ENCODE measurements at regions of chr1 and their contacts with region 1.

Region 1: DNA sequence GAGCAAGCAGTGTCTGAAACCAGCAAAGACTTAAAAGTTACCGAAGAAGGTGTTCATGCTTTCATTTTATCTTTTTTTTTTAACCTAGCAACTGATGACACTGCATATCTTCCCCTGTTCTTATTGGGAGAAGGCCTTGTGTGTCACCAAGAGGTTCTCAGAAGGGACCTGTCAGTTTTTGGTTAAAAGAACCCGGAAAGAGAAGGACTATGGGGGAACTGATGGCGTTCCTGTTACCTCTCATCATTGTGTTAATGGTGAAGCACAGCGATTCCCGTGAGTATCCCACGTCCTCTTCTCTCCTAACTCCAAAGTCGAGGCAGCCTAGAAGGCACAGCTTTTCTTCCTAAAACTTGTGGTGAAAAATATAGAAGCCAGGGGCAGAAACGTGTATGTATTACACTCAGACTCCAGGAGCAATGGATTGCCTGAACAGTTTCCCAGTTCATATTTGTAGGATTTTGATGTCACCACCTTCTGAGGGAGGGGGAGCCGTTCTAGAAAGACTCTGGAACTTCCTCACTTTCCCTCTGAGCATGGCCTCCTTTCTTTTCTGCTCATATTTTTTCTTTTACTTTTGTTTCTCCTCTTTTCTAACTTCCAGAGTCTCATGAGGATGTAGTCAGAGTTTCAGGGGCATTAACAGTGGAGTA is at the start of gene MR1:
- DNase-seq: peak; percentile 43
- H3K4me3 Mint-ChIP-seq: peak within 1 kb of the TSS; percentile 91
- H3K27ac Mint-ChIP-seq: peak within 1 kb of the TSS; percentile 94
- H3K4me1 Mint-ChIP-seq: peaks cover 53% of the 10 kb centered on the region
- H3K27me3 Mint-ChIP-seq: no peaks in the 10 kb centered on the region
- total RNA-seq, gene MR1: 36.4 to 36.5 TPM

Region 2: GRCh38 chr1:181010789-181011188 is 23.1 kb before region 1 on chr1:
- CTCF ChIA-PET with region 1: no interaction called
- POLR2A ChIA-PET with region 1: no interaction called
- DNase-seq: no peak
- H3K4me3 Mint-ChIP-seq: no peak overlapping the region
- H3K27ac Mint-ChIP-seq: no peak overlapping the region
- H3K4me1 Mint-ChIP-seq: peaks cover 24% of the 10 kb centered on the region
- H3K27me3 Mint-ChIP-seq: no peaks in the 10 kb centered on the region

Region 3: DNA sequence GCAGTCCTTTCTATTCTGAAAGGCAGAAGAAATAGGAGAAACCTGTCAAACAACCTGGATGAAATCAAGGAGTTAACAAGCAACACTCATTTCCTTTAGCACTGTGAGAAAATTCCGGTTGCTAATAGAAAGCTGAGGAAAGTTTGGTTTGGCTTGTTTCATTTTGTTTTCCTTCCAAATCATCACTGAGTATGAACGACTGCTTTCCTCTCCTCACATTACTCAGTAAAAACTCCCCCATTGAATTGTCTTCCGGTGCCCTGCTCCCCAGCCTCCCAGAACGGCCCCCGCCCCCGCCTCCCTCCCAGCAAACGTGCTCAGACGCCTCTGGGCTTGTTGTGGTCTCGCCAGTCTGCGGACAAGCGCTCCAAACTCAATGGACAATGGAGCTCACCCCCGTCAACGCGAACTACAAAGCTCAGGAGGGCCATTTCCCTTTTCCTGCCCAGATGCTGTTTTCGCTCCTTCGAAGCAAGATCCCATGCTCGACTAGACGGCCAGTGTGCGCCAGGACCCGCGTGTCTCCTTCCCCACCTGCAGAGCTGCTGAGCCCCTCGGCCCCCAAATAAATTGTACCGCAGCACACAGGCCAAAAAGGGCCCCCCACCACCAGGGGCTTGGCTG is 12.0 kb before region 1 on chr1:
- CTCF ChIA-PET with region 1: interaction called, 19 read pairs
- POLR2A ChIA-PET with region 1: interaction called, 92 read pairs
- DNase-seq: peak; percentile 62
- H3K4me3 Mint-ChIP-seq: peak overlapping the region; percentile 95
- H3K27ac Mint-ChIP-seq: peak overlapping the region; percentile 89
- H3K4me1 Mint-ChIP-seq: peaks cover 48% of the 10 kb centered on the region
- H3K27me3 Mint-ChIP-seq: peaks cover 18% of the 10 kb centered on the region

Region 4: DNA sequence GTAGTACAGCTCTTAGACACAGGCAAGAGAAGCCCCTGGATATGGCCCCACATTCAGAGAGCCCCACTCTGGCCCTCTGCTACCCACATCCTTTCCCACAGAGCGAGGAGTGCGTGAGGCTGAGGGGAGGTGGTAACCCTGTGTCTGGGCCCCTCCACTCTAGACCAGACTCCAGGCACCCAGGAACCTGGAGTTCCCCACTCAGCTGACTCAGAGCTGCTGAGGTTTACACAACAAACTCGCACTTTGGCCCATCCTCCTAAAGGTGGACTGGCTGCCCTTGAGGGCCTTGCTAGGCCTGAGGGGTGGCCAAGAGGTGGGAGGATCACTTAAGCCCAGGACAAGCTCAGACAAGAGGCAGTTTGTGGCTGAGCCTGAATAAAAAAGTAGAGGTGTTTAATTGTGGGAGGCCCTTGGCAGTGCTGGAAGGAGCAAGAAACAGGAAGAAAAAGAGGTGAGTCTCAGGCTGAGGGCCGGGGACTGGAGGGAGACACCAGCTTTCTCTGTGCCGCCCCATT is 10.6 kb after region 1 on chr1:
- CTCF ChIA-PET with region 1: interaction called, 3 read pairs
- POLR2A ChIA-PET with region 1: interaction called, 22 read pairs
- DNase-seq: peak; percentile 57
- H3K4me3 Mint-ChIP-seq: no peak overlapping the region
- H3K27ac Mint-ChIP-seq: peak overlapping the region; percentile 80
- H3K4me1 Mint-ChIP-seq: peaks cover 46% of the 10 kb centered on the region
- H3K27me3 Mint-ChIP-seq: no peaks in the 10 kb centered on the region

Region 5: DNA sequence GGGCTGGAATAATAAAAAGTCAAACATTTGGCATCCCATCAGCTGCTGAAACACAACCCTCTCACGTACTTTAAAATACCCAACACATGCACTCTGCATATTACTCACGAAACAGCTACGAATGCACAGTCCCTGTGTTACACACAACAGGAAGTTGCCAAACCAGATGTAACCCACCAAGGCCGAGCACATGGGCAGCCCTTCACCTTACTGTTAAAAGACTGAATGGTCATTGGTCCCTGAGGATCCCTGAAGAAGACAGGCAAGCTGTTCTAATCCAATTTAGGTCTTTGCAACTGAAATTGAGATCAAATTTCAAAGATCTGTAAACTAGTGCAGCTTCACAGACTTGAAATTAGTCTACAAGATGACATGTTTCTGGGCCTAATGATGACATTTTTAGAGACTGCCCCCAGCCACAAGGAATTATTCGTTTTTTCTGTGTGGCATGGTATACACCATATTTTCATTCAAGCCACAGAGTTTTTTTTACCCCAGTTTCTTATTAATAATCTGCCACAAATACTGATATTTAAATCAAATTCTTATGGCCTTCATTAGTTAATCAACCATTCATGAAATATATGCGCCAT is 29.0 kb after region 1 on chr1:
- CTCF ChIA-PET with region 1: interaction called, 10 read pairs
- POLR2A ChIA-PET with region 1: interaction called, 4 read pairs
- DNase-seq: peak; percentile 57
- H3K4me3 Mint-ChIP-seq: peak overlapping the region; percentile 65
- H3K27ac Mint-ChIP-seq: peak overlapping the region; percentile 79
- H3K4me1 Mint-ChIP-seq: peaks cover 25% of the 10 kb centered on the region
- H3K27me3 Mint-ChIP-seq: peaks cover 2% of the 10 kb centered on the region

Region 6: DNA sequence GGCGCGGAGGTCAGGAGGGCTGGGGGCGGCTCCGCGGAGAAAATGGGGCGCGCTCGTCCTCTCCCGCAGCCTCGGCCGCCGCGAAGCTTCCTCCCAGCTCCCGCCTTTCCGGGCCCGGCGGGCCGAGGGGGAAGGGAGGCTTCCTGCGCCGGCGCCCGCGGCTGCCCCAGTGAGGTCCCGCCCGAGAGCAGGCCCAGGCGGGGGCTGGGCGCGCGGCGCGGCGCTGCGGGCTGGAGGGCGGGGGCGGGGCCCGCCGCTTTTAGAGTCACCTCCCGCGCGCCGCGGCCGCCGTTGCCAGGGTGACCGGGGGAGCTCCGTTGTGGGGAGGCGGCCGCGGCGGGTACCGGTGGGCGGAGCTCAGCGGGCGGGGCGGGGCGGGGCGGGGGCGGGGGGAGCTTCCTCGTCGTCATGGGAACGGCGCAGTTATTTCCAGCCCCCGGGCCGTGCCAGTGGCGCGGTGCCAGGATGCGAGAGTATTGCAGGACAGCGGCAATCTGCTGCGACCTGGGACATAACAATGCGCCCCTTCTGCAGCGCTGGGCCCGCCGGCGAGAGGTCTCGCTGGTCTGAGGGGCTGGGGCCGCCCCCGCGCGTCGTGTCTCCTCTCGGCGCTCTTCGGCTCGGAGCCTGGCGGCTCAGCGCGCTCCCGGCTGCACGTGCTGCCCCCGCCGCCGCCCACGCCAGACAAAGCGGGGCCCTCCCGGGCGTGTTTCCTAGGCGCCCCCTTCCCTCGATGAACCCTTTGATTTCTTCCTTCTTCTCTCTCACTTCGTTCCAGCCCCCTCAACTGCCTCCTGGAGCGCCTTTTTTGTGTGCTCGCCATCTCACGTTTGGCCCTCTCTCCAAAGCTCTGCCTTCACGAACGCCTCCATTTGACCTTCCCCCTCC is 71.5 kb after region 1 on chr1:
- CTCF ChIA-PET with region 1: interaction called, 5 read pairs
- POLR2A ChIA-PET with region 1: interaction called, 10 read pairs
- DNase-seq: peak; percentile 94
- H3K4me3 Mint-ChIP-seq: peak overlapping the region; percentile 78
- H3K27ac Mint-ChIP-seq: peak overlapping the region; percentile 51
- H3K4me1 Mint-ChIP-seq: peaks cover 69% of the 10 kb centered on the region
- H3K27me3 Mint-ChIP-seq: peaks cover 35% of the 10 kb centered on the region

Measured in activated CD4-positive, alpha-beta memory T cell treated with anti-CD3 and anti-CD28 coated beads, Interleukin-2, amount 10 ng/mL, durations not matched to agents 7 days and 5 days (primary cell).